ENCODE measurements at regions of chr17 and their contacts with region 1.

Region 1: DNA sequence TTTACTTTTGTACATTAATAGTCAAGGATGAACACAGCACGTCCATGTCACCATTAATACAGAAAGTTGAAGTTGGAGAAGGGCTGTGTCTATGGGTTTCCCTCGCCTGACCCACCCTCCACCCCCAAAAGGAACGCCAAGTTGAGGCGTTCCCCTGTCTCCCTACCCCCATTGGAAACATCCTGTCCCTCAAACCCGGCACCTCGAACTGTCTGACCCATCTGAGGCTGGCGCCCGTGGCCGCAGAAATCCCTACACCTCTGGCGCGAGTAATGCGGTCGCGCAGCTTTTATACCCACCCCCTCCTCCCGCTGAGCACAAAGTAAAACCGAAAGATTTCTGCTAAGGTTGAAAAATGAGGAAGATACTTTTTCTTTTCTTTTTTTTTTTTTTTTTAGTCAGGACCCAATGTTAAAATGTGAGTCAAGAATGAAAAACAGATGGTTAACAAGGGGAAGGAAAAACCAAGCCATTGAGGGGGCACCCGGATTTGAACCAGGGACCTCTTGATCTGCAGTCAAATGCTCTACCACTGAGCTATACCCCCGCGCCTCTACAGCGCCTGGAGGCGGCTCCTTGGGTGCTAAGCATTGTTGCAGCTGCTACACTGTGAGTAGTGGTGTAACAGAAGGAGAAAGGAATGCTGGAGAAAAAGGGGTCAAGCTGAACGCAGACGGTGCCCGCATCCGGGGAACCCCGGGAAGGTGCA is 887 bp upstream of the LASP1 start:
- DNase-seq: peak; percentile 94
- H3K4me3 Mint-ChIP-seq: peak overlapping the region; percentile 87
- H3K27ac Mint-ChIP-seq: peak overlapping the region; percentile 96
- H3K4me1 Mint-ChIP-seq: peaks cover 44% of the 10 kb centered on the region
- H3K27me3 Mint-ChIP-seq: peaks cover 2% of the 10 kb centered on the region

Region 2: DNA sequence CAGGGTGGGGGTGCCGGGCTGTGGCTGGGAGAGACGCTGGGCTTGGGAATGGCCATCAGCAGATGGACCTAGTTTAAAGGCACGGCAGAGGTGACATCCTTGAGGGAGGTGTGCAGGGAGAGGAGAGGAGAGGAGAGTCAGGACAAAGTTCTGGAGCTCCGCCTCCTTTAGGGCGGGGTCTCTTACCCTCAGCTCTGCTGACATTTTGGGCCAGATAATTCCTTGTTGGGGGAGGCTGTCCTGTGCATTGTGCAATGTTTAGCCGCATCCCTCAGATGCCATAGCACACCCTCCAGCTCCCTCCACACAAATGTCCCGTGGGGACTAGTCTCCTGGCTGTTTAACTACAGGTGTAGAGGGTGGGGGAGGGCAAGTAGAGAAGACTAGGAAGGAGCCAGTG is 392.4 kb before region 1 on chr17:
- CTCF ChIA-PET with region 1: no interaction called
- POLR2A ChIA-PET with region 1: no interaction called
- intact Hi-C with region 1: no loop called
- DNase-seq: no peak
- H3K4me3 Mint-ChIP-seq: no peak overlapping the region
- H3K27ac Mint-ChIP-seq: no peak overlapping the region
- H3K4me1 Mint-ChIP-seq: no peaks in the 10 kb centered on the region
- H3K27me3 Mint-ChIP-seq: peaks cover 2% of the 10 kb centered on the region

Region 3: DNA sequence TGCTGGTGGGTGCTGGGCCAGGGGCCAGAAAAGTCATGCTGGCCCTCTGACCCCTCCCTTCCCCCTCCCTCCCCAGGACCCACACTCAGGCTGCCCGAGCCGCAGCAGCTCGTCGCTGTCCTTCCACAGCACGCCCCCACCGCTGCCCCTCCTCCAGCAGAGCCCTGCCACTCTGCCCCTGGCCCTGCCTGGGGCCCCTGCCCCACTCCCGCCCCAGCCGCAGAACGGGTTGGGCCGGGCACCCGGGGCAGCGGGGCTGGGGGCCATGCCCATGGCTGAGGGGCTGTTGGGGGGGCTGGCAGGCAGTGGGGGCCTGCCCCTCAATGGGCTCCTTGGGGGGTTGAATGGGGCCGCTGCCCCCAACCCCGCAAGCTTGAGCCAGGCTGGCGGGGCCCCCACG is 147.2 kb before region 1 on chr17:
- CTCF ChIA-PET with region 1: no interaction called
- POLR2A ChIA-PET with region 1: no interaction called
- intact Hi-C with region 1: no loop called
- DNase-seq: no peak
- H3K4me3 Mint-ChIP-seq: no peak overlapping the region
- H3K27ac Mint-ChIP-seq: no peak overlapping the region
- H3K4me1 Mint-ChIP-seq: peaks cover 46% of the 10 kb centered on the region
- H3K27me3 Mint-ChIP-seq: no peaks in the 10 kb centered on the region

Region 4: GRCh38 chr17:38768417-38768816 is 100.6 kb before region 1 on chr17:
- CTCF ChIA-PET with region 1: no interaction called
- POLR2A ChIA-PET with region 1: no interaction called
- intact Hi-C with region 1: no loop called
- DNase-seq: no peak
- H3K4me3 Mint-ChIP-seq: no peak overlapping the region
- H3K27ac Mint-ChIP-seq: no peak overlapping the region
- H3K4me1 Mint-ChIP-seq: no peaks in the 10 kb centered on the region
- H3K27me3 Mint-ChIP-seq: no peaks in the 10 kb centered on the region

Region 5: GRCh38 chr17:38799378-38800236 is 69.4 kb before region 1 on chr17 and contains the start of gene PIP4K2B:
- CTCF ChIA-PET with region 1: no interaction called
- POLR2A ChIA-PET with region 1: no interaction called
- intact Hi-C with region 1: loop called (anchors 1 kb)
- DNase-seq: peak; percentile 94
- H3K4me3 Mint-ChIP-seq: peak within 1 kb of the TSS; percentile 80
- H3K27ac Mint-ChIP-seq: peak within 1 kb of the TSS; percentile 86
- H3K4me1 Mint-ChIP-seq: peaks cover 33% of the 10 kb centered on the region
- H3K27me3 Mint-ChIP-seq: no peaks in the 10 kb centered on the region
- total RNA-seq, gene PIP4K2B: 37.8 to 37.9 TPM

Region 6: GRCh38 chr17:38853292-38854219 is 15.4 kb before region 1 on chr17 and contains the start of gene RPL23:
- CTCF ChIA-PET with region 1: interaction called, 12 read pairs
- POLR2A ChIA-PET with region 1: interaction called, 97 read pairs
- intact Hi-C with region 1: loop called (anchors 1 kb)
- DNase-seq: peak; percentile 95
- H3K4me3 Mint-ChIP-seq: peak within 1 kb of the TSS; percentile 99
- H3K27ac Mint-ChIP-seq: peak within 1 kb of the TSS; percentile 99
- H3K4me1 Mint-ChIP-seq: peaks cover 38% of the 10 kb centered on the region
- H3K27me3 Mint-ChIP-seq: no peaks in the 10 kb centered on the region
- total RNA-seq, gene RPL23: 1,774 to 1,791 TPM

Region 7: GRCh38 chr17:38893607-38894006 is 24.6 kb after region 1 on chr17:
- CTCF ChIA-PET with region 1: interaction called, 16 read pairs
- POLR2A ChIA-PET with region 1: interaction called, 31 read pairs
- intact Hi-C with region 1: loop called (anchors 1 kb)
- DNase-seq: peak; percentile 73
- H3K4me3 Mint-ChIP-seq: no peak overlapping the region
- H3K27ac Mint-ChIP-seq: peak overlapping the region; percentile 64
- H3K4me1 Mint-ChIP-seq: peaks cover 88% of the 10 kb centered on the region
- H3K27me3 Mint-ChIP-seq: no peaks in the 10 kb centered on the region

Region 8: GRCh38 chr17:38926293-38927070 is 57.5 kb after region 1 on chr17:
- CTCF ChIA-PET with region 1: interaction called, 9 read pairs
- POLR2A ChIA-PET with region 1: interaction called, 3 read pairs
- intact Hi-C with region 1: loop called (anchors 2 kb)
- DNase-seq: no peak
- H3K4me3 Mint-ChIP-seq: no peak overlapping the region
- H3K27ac Mint-ChIP-seq: no peak overlapping the region
- H3K4me1 Mint-ChIP-seq: peaks cover 30% of the 10 kb centered on the region
- H3K27me3 Mint-ChIP-seq: no peaks in the 10 kb centered on the region

Region 9: DNA sequence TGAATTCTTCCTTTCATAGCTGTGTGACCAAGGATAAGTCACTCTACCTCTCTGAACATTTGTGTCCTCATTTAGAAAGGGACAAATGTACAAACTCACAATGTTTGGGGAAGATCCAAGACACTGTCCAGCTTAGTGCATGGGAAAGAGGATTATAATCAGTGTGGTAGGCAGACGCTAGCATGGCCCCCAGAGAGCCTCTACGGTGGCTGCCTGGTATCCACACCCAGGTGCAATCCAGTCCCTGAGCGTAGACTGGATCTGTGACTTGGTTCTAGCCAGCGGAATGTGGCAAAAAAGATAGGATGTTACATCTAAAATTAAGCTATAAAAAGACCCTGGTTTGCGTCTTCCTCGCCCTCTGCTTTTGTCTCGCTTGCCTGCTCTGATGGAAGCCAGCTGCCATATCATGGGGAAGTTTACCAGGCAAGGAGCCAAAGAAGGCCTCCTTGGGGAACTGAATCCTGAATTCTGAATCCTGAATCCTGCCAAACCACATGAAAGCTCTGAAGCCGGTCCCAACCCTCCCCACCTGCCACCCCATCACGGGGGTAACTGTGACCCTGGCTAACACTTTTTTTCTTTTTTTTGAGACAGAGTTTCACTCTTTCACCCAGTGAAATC is 230.8 kb after region 1 on chr17:
- CTCF ChIA-PET with region 1: no interaction called
- POLR2A ChIA-PET with region 1: no interaction called
- intact Hi-C with region 1: loop called (anchors 10 kb)
- DNase-seq: no peak
- H3K4me3 Mint-ChIP-seq: no peak overlapping the region
- H3K27ac Mint-ChIP-seq: no peak overlapping the region
- H3K4me1 Mint-ChIP-seq: peaks cover 37% of the 10 kb centered on the region
- H3K27me3 Mint-ChIP-seq: no peaks in the 10 kb centered on the region

Measured in activated CD4-positive, alpha-beta memory T cell treated with anti-CD3 and anti-CD28 coated beads for 36 hours (primary cell).